ENCODE measurements at regions of chrX and their contacts with region 1.

Region 1: GRCh38 chrX:9456250-9457074 is 8.4 kb upstream of the TBL1X start:
- DNase-seq: peak; percentile 26
- H3K4me3 Mint-ChIP-seq: peak overlapping the region; percentile 23
- H3K27ac Mint-ChIP-seq: peak overlapping the region; percentile 91
- H3K4me1 Mint-ChIP-seq: peaks cover 27% of the 10 kb centered on the region
- H3K27me3 Mint-ChIP-seq: no peaks in the 10 kb centered on the region

Region 2: GRCh38 chrX:9163214-9163681 is 293.2 kb before region 1 on chrX:
- intact Hi-C with region 1: loop called (anchors 1 kb)
- DNase-seq: no peak
- H3K4me3 Mint-ChIP-seq: no peak overlapping the region
- H3K27ac Mint-ChIP-seq: no peak overlapping the region
- H3K4me1 Mint-ChIP-seq: peaks cover 25% of the 10 kb centered on the region
- H3K27me3 Mint-ChIP-seq: no peaks in the 10 kb centered on the region

Region 3: GRCh38 chrX:9258421-9259104 is 197.9 kb before region 1 on chrX:
- intact Hi-C with region 1: loop called (anchors 1 kb)
- DNase-seq: no peak
- H3K4me3 Mint-ChIP-seq: no peak overlapping the region
- H3K27ac Mint-ChIP-seq: peak overlapping the region; percentile 36
- H3K4me1 Mint-ChIP-seq: peaks cover 26% of the 10 kb centered on the region
- H3K27me3 Mint-ChIP-seq: no peaks in the 10 kb centered on the region

Region 4: DNA sequence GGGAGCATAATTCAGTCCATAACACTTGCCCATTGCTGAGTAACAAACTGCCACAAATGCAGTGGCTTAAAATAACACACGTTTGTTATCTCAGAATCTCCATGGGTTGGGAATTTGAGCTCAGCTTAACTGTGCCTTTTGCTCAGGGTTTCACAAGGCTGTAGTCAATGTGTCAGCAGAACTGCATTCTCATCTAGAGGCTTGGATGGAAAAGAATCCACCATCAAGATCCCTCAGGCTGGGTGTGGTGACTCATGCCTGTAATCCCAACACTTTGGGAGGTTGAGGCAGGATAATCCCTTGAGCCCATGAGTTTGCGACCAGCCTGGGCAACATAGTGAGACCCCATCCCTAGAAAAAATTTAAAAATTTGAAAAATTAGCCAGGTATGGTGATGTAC is 17.5 kb before region 1 on chrX:
- intact Hi-C with region 1: loop called (anchors 2 kb)
- DNase-seq: no peak
- H3K4me3 Mint-ChIP-seq: no peak overlapping the region
- H3K27ac Mint-ChIP-seq: no peak overlapping the region
- H3K4me1 Mint-ChIP-seq: peaks cover 10% of the 10 kb centered on the region
- H3K27me3 Mint-ChIP-seq: no peaks in the 10 kb centered on the region

Region 5: GRCh38 chrX:9708904-9709553 is 252.6 kb after region 1 on chrX:
- intact Hi-C with region 1: loop called (anchors 2 kb)
- DNase-seq: peak; percentile 62
- H3K4me3 Mint-ChIP-seq: no peak overlapping the region
- H3K27ac Mint-ChIP-seq: no peak overlapping the region
- H3K4me1 Mint-ChIP-seq: peaks cover 8% of the 10 kb centered on the region
- H3K27me3 Mint-ChIP-seq: no peaks in the 10 kb centered on the region

Measured in activated T-helper 1 cell treated with anti-CD3 and anti-CD28 coated beads, Interleukin-12 subunit alpha, Interleukin-12 subunit beta, Interleukin-2, Interleukin-4 antibody, amounts not matched to agents 30 ng/mL and 10 ng/mL and 1 ng/mL, durations not matched to agents 14 hours and 24 hours and 36 hours (primary cell).